Psoas muscle (tissue), 8 donors: ENCODE measurements at regions of chr20 and their contacts with region 1.

Region 1: DNA sequence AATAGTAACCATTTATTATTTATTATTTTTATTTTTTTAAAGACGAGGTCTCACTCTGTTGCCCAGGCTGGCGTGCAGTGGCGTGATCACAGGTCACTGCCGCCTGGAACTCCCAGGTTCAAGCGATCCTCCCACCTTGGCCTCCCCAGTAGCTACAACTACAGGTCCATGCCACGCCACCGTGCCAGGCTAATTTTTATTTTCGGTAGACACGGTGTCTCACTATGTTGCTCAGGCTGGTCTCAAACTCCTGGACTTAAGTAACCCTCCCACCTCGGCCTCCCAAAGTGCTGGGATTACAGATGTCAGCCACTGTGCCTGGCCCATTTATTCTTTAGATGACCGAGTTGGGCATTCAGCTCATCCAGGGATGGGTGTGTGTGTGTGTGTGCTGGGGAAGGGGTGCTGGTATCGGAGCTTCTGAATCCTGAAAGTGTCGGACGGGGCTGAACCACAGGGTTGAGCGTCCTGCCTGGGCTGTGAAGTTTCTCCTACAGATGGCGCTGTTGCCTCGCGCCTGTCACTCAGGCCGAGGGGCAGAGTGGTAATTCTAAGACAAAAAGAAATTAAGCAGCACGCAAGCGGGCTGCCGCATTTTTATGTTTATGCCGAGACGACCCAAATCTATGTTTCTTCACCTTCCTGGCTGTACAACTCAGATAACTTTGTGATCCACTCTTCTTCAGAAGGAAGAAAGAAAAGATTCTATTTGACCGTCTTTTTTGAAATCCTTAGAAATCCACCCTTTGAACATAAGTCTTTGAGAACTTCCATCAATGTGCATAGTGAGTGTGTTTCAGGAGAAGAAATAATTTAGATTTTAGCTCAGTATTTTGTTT is 252.8 kb downstream of the CDH26 start:
- DNase-seq: peak; percentile 60 to 80
- ATAC-seq: peak; percentile 79 to 93 (median 86)
- H3K4me3 ChIP-seq: no peak overlapping the region
- H3K27ac ChIP-seq: no peak overlapping the region
- H3K4me1 ChIP-seq: no peaks in the 10 kb centered on the region
- H3K27me3 ChIP-seq: no peaks in the 10 kb centered on the region
- CTCF ChIP-seq: peak; percentile 88

Region 2: DNA sequence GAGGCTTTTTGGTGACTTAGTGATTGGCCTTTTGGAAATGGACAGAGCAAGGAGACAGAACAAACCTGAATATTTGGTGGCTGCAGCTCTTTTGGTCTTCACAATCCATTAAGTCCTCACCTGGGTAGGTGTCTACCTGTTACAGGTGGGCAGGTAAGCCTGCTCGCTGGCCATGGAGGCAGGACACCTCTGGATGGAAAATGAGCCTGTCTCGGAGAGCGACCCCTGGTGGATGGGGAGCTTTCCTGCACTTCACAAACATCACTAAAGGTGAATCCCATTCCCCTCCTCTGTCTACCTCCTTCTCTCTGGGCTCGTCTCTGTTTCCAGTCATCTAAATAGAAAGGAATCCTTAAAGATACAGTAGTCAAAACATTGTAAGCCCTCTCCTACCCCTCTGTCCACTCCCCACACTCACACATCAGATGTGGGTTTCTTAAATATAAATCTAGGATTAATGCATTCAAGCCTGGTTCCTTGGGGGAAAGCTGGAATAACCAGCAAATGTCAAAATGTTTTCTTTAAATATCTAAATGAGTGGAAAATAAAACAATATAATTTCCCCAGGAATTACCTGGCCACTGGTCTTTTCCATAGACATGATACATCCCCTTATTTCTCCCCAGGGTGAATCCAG is 52.1 kb after region 1 on chr20:
- intact Hi-C with region 1: loop called in 1 of 2 experiments (anchors 5 kb)
- DNase-seq: peak in 1 of 2 donors; percentile 26
- ATAC-seq: peak in 2 of 4 donors; percentile 52 to 66
- H3K4me3 ChIP-seq: no peak overlapping the region
- H3K27ac ChIP-seq: no peak overlapping the region
- H3K4me1 ChIP-seq: no peaks in the 10 kb centered on the region
- H3K27me3 ChIP-seq: peaks cover 0 to 3% (median 0%) of the 10 kb centered on the region in 3 donors
- CTCF ChIP-seq: peak; percentile 49

Region 3: GRCh38 chr20:60352066-60352465 is 141.1 kb after region 1 on chr20:
- intact Hi-C with region 1: loop called in 1 of 2 experiments (anchors 10 kb)
- DNase-seq: no peak
- ATAC-seq: no peak
- H3K4me3 ChIP-seq: no peak overlapping the region
- H3K27ac ChIP-seq: no peak overlapping the region
- H3K4me1 ChIP-seq: no peaks in the 10 kb centered on the region
- H3K27me3 ChIP-seq: no peaks in the 10 kb centered on the region
- CTCF ChIP-seq: no peak

Region 4: DNA sequence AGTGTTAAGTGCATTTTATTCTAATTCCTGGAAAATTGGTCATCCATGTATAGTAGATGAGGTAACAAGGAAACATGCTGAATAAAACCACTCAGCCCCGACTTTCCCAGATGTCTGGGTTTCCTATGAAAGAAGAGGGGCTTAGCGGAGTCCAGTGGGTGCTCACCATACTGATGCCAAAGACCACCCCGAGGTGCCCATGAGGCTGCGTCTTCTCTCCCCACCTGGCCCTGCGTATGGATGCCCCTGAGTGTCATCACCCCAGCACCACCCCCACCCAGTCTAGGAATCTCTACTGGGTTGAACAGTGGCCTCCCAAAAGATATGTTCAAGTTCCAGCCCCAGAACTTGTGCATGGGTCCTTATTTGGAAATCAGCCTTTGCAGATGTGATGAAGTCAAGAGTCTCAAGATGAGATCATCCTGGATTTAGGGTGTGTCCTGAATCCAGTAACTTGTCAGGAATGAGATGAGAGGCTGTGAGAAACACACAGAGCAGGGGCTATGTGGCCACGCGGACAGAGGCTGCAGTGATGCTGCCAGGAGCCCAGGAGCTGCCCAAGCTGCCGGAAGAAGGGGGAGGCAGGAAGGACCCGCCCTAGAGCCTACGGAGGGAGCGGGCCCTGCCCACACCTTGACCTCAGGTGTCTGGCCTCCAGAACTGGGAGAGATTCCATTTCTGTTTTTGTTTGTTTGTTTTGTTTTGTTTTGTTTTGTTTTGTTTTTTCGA is 916.5 kb after region 1 on chr20:
- intact Hi-C with region 1: loop called in 1 of 2 experiments (anchors 5 kb)
- DNase-seq: no peak
- ATAC-seq: no peak
- H3K4me3 ChIP-seq: no peak overlapping the region
- H3K27ac ChIP-seq: no peak overlapping the region
- H3K4me1 ChIP-seq: no peaks in the 10 kb centered on the region
- H3K27me3 ChIP-seq: peaks cover 0 to 4% (median 0%) of the 10 kb centered on the region in 3 donors
- CTCF ChIP-seq: no peak

Region 5: GRCh38 chr20:61263084-61263695 is 1052.2 kb after region 1 on chr20:
- intact Hi-C with region 1: loop called in 1 of 2 experiments (anchors 10 kb)
- DNase-seq: no peak
- ATAC-seq: no peak
- H3K4me3 ChIP-seq: no peak overlapping the region
- H3K27ac ChIP-seq: no peak overlapping the region
- H3K4me1 ChIP-seq: no peaks in the 10 kb centered on the region
- H3K27me3 ChIP-seq: peaks cover 0 to 2% (median 0%) of the 10 kb centered on the region in 3 donors
- CTCF ChIP-seq: peak; percentile 64

Region 6: GRCh38 chr20:61896058-61896961 is 1685.3 kb after region 1 on chr20:
- intact Hi-C with region 1: loop called in 1 of 2 experiments (anchors 10 kb)
- DNase-seq: peak in 1 of 2 donors; percentile 57
- ATAC-seq: peak; percentile 59 to 72 (median 64)
- H3K4me3 ChIP-seq: no peak overlapping the region
- H3K27ac ChIP-seq: no peak overlapping the region
- H3K4me1 ChIP-seq: no peaks in the 10 kb centered on the region
- H3K27me3 ChIP-seq: peaks cover 0 to 19% (median 4%) of the 10 kb centered on the region in 3 donors
- CTCF ChIP-seq: peak; percentile 69